ENCODE measurements at regions of chr13 and their contacts with region 1.

Region 1: GRCh38 chr13:23871616-23872220 is 17.5 kb downstream of the MIPEP start:
- DNase-seq: no peak
- H3K4me3 Mint-ChIP-seq: no peak overlapping the region
- H3K27ac Mint-ChIP-seq: no peak overlapping the region
- H3K4me1 Mint-ChIP-seq: no peaks in the 10 kb centered on the region
- H3K27me3 Mint-ChIP-seq: no peaks in the 10 kb centered on the region

Region 2: GRCh38 chr13:23466144-23467002 is 405.3 kb before region 1 on chr13:
- intact Hi-C with region 1: loop called (anchors 1 kb)
- DNase-seq: peak; percentile 40
- H3K4me3 Mint-ChIP-seq: peak overlapping the region; percentile 68
- H3K27ac Mint-ChIP-seq: peak overlapping the region; percentile 21
- H3K4me1 Mint-ChIP-seq: peaks cover 5% of the 10 kb centered on the region
- H3K27me3 Mint-ChIP-seq: peaks cover 22% of the 10 kb centered on the region

Region 3: GRCh38 chr13:23510979-23511735 is 360.6 kb before region 1 on chr13:
- intact Hi-C with region 1: loop called (anchors 1 kb)
- DNase-seq: no peak
- H3K4me3 Mint-ChIP-seq: no peak overlapping the region
- H3K27ac Mint-ChIP-seq: no peak overlapping the region
- H3K4me1 Mint-ChIP-seq: no peaks in the 10 kb centered on the region
- H3K27me3 Mint-ChIP-seq: peaks cover 8% of the 10 kb centered on the region

Region 4: GRCh38 chr13:23667750-23668149 is 204.0 kb before region 1 on chr13:
- intact Hi-C with region 1: loop called (anchors 5 kb)
- DNase-seq: no peak
- H3K4me3 Mint-ChIP-seq: no peak overlapping the region
- H3K27ac Mint-ChIP-seq: no peak overlapping the region
- H3K4me1 Mint-ChIP-seq: no peaks in the 10 kb centered on the region
- H3K27me3 Mint-ChIP-seq: peaks cover 10% of the 10 kb centered on the region

Region 5: GRCh38 chr13:23715762-23716235 is 155.9 kb before region 1 on chr13:
- intact Hi-C with region 1: loop called (anchors 5 kb)
- DNase-seq: no peak
- H3K4me3 Mint-ChIP-seq: no peak overlapping the region
- H3K27ac Mint-ChIP-seq: no peak overlapping the region
- H3K4me1 Mint-ChIP-seq: no peaks in the 10 kb centered on the region
- H3K27me3 Mint-ChIP-seq: peaks cover 16% of the 10 kb centered on the region

Region 6: GRCh38 chr13:23899555-23899954 is 27.8 kb after region 1 on chr13:
- intact Hi-C with region 1: loop called (anchors 1 kb)
- DNase-seq: no peak
- H3K4me3 Mint-ChIP-seq: no peak overlapping the region
- H3K27ac Mint-ChIP-seq: no peak overlapping the region
- H3K4me1 Mint-ChIP-seq: peaks cover 10% of the 10 kb centered on the region
- H3K27me3 Mint-ChIP-seq: peaks cover 34% of the 10 kb centered on the region